ENCODE measurements at regions of chr9 and their contacts with region 1.

Region 1: DNA sequence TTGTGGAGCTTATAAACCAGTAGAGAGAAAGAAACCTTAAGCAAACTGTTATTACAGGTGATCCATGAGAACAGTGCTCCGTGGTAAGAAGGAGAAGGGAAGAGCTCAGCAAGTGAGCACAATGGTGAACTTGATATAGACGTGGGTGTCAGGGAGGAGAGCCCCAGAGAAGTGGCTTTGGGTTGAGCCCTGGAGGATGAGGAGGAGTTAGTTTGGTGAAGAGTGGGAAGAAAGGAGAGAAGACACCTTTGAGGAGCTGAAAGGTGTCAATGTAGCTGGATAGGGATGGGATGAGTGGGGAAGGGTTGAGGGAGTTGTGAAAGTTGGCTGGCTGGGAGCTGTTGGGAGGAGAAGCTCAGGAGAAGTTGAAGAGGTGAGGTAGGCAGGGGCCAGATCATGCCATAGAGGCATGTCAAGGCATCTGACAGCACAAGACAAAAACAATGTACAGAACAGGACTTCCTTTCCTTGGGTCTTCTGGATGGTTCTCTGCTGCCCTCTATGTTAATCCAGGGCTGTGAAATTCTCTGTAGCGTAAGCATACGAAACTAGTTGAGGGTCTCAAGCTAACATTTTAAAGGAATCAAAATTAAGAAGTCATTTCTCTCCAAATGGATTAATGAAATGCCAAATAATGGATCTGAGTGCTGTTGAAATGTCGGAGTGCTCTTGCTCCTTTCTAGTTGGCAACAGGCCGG is 501.9 kb downstream of the KDM4C start:
- DNase-seq: no peak
- H3K4me3 ChIP-seq: no peak overlapping the region
- H3K27ac ChIP-seq: no peak overlapping the region
- H3K4me1 ChIP-seq: no peaks in the 10 kb centered on the region
- H3K27me3 ChIP-seq: no peaks in the 10 kb centered on the region
- CTCF ChIP-seq: no peak
- POLR2A ChIP-seq: no peak

Region 2: DNA sequence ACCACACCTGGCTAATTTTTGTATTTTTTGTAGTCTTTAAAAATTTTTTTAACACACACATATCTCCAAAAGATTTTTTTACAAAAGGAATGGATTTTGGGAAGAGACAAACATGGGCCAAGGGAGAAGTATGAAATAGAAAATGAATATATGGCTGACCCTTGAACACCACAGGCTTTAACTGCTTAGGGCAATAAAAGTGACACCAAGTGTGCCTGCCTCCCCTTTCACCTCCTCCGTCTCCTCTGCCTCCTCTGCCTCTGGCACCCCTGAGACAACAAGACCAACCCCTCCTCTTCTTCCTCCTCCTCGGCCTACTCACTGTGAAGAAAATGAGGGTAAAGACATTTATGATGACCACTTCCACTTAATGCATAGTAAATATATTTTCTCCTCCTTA is 18.0 kb before region 1 on chr9:
- intact Hi-C with region 1: loop called (anchors 1 kb)
- DNase-seq: no peak
- H3K4me3 ChIP-seq: no peak overlapping the region
- H3K27ac ChIP-seq: no peak overlapping the region
- H3K4me1 ChIP-seq: no peaks in the 10 kb centered on the region
- H3K27me3 ChIP-seq: no peaks in the 10 kb centered on the region
- CTCF ChIP-seq: no peak
- POLR2A ChIP-seq: no peak

Region 3: GRCh38 chr9:8365029-8365428 is 1105.3 kb after region 1 on chr9:
- intact Hi-C with region 1: loop called (anchors 5 kb)
- DNase-seq: no peak
- H3K4me3 ChIP-seq: no peak overlapping the region
- H3K27ac ChIP-seq: no peak overlapping the region
- H3K4me1 ChIP-seq: no peaks in the 10 kb centered on the region
- H3K27me3 ChIP-seq: no peaks in the 10 kb centered on the region
- CTCF ChIP-seq: no peak
- POLR2A ChIP-seq: no peak